Activated naive CD4-positive, alpha-beta T cell treated with anti-CD3 and anti-CD28 coated beads, Interleukin-2, amount 10 ng/mL, durations not matched to agents 7 days and 5 days (primary cell): ENCODE measurements at regions of chr6 and their contacts with region 1.

Region 1: GRCh38 chr6:125153391-125154117 is at the start of gene TPD52L1:
- DNase-seq: peak; percentile 73
- H3K4me3 Mint-ChIP-seq: peak within 1 kb of the TSS; percentile 71
- H3K27ac Mint-ChIP-seq: no peak within 1 kb of the TSS
- H3K4me1 Mint-ChIP-seq: peaks cover 11% of the 10 kb centered on the region
- H3K27me3 Mint-ChIP-seq: peaks cover 45% of the 10 kb centered on the region

Region 2: DNA sequence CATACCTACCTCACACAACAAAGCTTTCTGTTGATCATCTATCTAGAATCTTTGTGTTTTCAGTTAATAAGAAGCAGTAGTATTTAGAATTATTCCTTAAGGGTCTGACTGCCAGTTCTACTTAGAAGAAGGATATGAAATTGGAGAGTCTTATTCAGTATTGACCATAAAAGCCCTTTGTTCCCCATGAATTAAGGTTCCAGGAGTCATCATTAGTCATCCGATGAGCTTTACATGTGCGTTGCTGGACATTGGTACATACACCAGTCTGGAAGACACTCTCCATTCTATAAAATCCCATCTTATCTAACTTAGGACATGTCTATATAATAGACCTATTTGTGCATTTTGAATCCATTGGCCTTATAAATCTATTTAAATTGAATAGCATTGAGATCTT is 225.7 kb before region 1 on chr6:
- CTCF ChIA-PET with region 1: no interaction called
- DNase-seq: no peak
- H3K4me3 Mint-ChIP-seq: no peak overlapping the region
- H3K27ac Mint-ChIP-seq: no peak overlapping the region
- H3K4me1 Mint-ChIP-seq: no peaks in the 10 kb centered on the region
- H3K27me3 Mint-ChIP-seq: no peaks in the 10 kb centered on the region

Region 3: GRCh38 chr6:125163811-125164210 is 10.3 kb after region 1 on chr6:
- CTCF ChIA-PET with region 1: interaction called, 10 read pairs
- DNase-seq: no peak
- H3K4me3 Mint-ChIP-seq: no peak overlapping the region
- H3K27ac Mint-ChIP-seq: no peak overlapping the region
- H3K4me1 Mint-ChIP-seq: no peaks in the 10 kb centered on the region
- H3K27me3 Mint-ChIP-seq: peaks cover 1% of the 10 kb centered on the region

Region 4: DNA sequence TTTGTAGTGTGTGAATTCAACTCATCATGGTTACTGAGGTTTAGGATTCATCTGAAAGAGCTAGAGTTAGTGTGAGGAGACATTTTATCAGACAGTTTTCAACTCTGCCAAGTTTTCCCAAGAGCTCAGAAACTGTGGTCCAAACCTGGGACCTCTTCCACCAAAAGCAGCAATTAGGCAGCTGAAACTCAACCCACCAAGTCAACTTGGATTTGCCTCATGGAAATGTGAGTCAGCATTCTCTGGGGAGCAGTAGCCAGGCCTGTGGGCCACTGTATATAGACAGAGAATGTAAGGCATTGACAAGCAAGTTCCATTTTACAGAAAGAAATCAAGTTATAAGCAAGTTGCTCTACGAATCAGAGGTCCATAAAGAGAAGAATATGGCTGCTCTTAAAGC is 327.0 kb after region 1 on chr6:
- CTCF ChIA-PET with region 1: no interaction called
- DNase-seq: no peak
- H3K4me3 Mint-ChIP-seq: no peak overlapping the region
- H3K27ac Mint-ChIP-seq: no peak overlapping the region
- H3K4me1 Mint-ChIP-seq: no peaks in the 10 kb centered on the region
- H3K27me3 Mint-ChIP-seq: peaks cover 4% of the 10 kb centered on the region